PC-3 (cell line): ENCODE measurements at regions of chr3 and their contacts with region 1.

Region 1: DNA sequence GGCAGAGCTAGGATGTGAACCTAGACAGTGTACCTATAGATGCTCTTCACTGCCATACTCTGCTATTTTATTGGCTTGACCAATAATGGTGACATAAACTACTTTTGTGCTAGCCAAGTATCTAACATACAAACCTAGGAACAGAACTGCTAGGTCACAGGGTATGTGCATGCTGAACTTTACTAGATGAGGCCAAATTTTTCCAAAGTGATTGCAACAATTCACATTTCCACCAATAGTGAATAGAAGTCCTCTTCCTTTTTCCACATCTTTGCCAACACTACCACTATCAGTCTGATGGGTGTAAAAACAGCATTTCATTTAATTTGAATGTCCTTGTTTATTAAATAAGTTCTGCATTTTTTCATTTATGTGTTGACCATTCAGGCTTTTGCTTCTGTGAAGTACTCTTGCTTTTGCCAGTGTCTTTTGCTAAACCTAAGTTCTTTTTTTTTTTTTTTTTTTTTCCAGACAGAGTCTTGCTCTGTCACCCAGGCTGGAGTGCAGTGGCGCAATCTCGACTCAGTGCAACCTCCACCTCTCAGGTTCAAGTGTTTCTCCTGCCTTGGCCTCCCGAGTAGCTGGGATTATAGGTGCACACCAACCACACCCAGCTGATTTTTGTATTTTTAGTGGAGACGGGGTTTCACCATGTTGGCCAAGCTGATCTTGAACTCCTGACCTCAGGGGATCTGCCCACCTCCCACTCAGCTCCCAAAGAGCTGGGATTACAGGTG is 54.1 kb downstream of the DCAF1 start:
- DNase-seq: no peak
- ATAC-seq: no peak
- H3K4me3 ChIP-seq: no peak overlapping the region
- H3K27ac ChIP-seq: no peak overlapping the region
- H3K4me1 ChIP-seq: no peaks in the 10 kb centered on the region
- H3K27me3 ChIP-seq: no peaks in the 10 kb centered on the region
- CTCF ChIP-seq: no peak

Region 2: GRCh38 chr3:51391075-51391567 is 54.6 kb before region 1 on chr3 and contains the start of gene RBM15B:
- CTCF ChIA-PET with region 1: no interaction called
- POLR2A ChIA-PET with region 1: no interaction called
- intact Hi-C with region 1: no loop called
- DNase-seq: peak; percentile 97
- ATAC-seq: peak; percentile 91
- H3K4me3 ChIP-seq: peak within 1 kb of the TSS; percentile 73
- H3K27ac ChIP-seq: peak within 1 kb of the TSS; percentile 38; the same call in 1 of the 2 replicates
- H3K4me1 ChIP-seq: peaks cover 48% of the 10 kb centered on the region
- H3K27me3 ChIP-seq: no peaks in the 10 kb centered on the region
- CTCF ChIP-seq: no peak; the same call in 1 of the 2 replicates
- total RNA-seq, gene RBM15B: 31.1 and 34.7 TPM in 2 replicates

Region 3: DNA sequence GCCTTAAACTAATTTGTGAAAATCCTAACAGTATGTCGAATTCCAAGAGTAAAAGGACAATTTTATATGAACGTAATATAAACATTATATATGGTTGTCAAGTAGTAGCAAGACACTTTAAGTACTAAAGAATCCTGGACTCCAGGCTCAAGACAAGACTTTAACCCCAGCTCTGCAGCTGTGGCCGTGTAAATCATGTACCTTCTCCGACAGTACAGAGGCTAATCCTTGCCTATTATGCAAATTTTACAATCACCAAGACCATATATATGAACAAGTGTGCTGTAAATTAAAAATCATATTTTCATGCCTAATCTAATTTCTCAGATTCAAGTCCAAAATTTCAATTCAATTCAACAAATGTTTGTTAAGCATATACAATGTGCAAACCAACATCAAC is 18.8 kb before region 1 on chr3:
- CTCF ChIA-PET with region 1: no interaction called
- POLR2A ChIA-PET with region 1: no interaction called
- intact Hi-C with region 1: no loop called
- DNase-seq: no peak
- ATAC-seq: no peak
- H3K4me3 ChIP-seq: no peak overlapping the region
- H3K27ac ChIP-seq: no peak overlapping the region
- H3K4me1 ChIP-seq: no peaks in the 10 kb centered on the region
- H3K27me3 ChIP-seq: no peaks in the 10 kb centered on the region
- CTCF ChIP-seq: no peak

Region 4: DNA sequence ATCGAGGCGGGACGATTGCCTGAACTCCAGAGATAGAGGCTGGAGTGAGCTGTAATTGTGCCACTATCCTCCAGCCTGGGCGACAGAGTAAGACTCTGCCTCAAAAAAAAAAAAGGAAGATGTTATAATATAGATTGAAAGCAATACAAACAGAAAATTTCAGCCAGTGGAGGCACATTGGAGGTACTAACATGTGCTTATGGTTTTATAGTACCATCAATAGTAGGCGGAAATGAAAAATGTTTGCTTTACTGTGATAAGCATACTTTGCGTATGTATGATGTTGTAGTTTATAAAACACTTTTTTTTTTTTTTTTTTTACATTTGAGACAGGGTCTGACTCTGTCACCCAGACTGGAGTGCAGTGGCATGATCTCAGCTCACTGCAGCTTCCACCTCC is 101.6 kb after region 1 on chr3:
- CTCF ChIA-PET with region 1: no interaction called
- POLR2A ChIA-PET with region 1: interaction called, 10 read pairs
- intact Hi-C with region 1: no loop called
- DNase-seq: no peak
- ATAC-seq: no peak
- H3K4me3 ChIP-seq: no peak overlapping the region
- H3K27ac ChIP-seq: no peak overlapping the region
- H3K4me1 ChIP-seq: no peaks in the 10 kb centered on the region
- H3K27me3 ChIP-seq: no peaks in the 10 kb centered on the region
- CTCF ChIP-seq: no peak